Dendritic cell treated with granulocyte-macrophage colony-stimulating factor and Interleukin-4, amounts not matched to agents 40 ng/mL and 50 ng/mL, for 4 days (primary cell): ENCODE measurements at regions of chr19 and their contacts with region 1.

Region 1: DNA sequence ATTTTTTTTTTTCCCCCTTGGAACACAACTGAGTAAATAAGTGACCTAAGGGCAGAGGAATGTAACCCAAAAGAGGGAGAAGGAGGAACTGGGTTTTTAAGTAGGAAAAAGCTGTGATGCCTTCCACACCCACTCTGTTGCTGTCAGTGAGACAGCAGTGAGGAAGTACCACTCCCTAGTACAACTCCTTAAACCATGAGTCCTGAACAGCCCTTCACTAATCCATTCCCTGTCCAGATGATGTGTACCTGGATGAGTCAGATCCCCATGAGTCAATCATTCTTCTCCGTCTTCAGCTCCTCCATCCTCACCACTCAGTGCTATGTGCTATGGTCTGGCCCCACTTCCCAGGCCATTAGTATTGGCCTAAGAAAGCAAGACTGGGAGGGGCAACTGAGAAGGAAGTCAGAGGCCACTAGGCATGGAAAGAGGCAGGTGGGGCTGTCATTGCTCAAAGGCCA is 12.9 kb upstream of the CXCL17 start:
- H3K4me3 Mint-ChIP-seq: no peak overlapping the region
- H3K27ac Mint-ChIP-seq: no peak overlapping the region
- H3K4me1 Mint-ChIP-seq: peaks cover 35% of the 10 kb centered on the region
- H3K27me3 Mint-ChIP-seq: peaks cover 50% of the 10 kb centered on the region

Region 2: GRCh38 chr19:42497492-42498168 is 42.0 kb after region 1 on chr19:
- intact Hi-C with region 1: loop called (anchors 5 kb)
- H3K4me3 Mint-ChIP-seq: no peak overlapping the region
- H3K27ac Mint-ChIP-seq: peak overlapping the region; percentile 25
- H3K4me1 Mint-ChIP-seq: peaks cover 33% of the 10 kb centered on the region
- H3K27me3 Mint-ChIP-seq: peaks cover 3% of the 10 kb centered on the region

Region 3: GRCh38 chr19:42626181-42626580 is 170.5 kb after region 1 on chr19:
- intact Hi-C with region 1: no loop called
- H3K4me3 Mint-ChIP-seq: no peak overlapping the region
- H3K27ac Mint-ChIP-seq: no peak overlapping the region
- H3K4me1 Mint-ChIP-seq: no peaks in the 10 kb centered on the region
- H3K27me3 Mint-ChIP-seq: peaks cover 3% of the 10 kb centered on the region